Left ventricle myocardium inferior (tissue), 1 donor: ENCODE measurements at regions of chr12 and their contacts with region 1.

Region 1: DNA sequence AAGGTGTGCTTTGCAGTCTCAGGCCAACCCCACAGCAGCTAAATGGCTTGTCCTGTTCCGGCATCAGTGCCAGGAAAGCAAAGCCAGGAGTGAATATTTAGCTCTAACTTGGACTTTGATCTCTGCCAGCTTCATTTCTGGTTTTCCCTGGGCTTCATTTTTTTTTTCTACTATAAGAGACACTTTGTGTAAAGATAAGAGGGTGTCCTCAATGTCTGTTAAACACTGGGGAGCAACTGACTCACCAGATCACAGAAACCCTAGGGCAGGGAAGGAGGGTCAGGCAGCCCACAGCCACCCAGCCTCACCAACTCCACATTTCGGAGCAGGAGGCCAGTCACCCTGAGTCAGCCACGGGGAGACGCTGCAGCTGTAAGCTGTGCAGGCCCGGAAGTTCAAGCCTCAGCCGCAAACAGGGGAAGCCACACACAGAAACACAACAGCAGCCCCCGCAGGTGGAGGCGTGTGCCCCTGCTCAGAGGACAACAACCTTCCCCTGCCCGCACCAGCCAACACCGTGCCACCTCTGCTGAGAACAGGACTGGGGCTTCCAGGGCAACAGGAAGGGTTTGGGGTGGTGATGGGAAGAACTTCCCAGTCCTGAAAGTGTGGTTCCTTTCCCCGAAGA is 6.3 kb downstream of the TNFRSF1A start:
- DNase-seq: peak; percentile 72
- H3K4me3 ChIP-seq: peak overlapping the region; percentile 90
- H3K27ac ChIP-seq: peak overlapping the region; percentile 99
- H3K4me1 ChIP-seq: peaks cover 88% of the 10 kb centered on the region
- H3K27me3 ChIP-seq: no peaks in the 10 kb centered on the region
- CTCF ChIP-seq: peak; percentile 53

Region 2: DNA sequence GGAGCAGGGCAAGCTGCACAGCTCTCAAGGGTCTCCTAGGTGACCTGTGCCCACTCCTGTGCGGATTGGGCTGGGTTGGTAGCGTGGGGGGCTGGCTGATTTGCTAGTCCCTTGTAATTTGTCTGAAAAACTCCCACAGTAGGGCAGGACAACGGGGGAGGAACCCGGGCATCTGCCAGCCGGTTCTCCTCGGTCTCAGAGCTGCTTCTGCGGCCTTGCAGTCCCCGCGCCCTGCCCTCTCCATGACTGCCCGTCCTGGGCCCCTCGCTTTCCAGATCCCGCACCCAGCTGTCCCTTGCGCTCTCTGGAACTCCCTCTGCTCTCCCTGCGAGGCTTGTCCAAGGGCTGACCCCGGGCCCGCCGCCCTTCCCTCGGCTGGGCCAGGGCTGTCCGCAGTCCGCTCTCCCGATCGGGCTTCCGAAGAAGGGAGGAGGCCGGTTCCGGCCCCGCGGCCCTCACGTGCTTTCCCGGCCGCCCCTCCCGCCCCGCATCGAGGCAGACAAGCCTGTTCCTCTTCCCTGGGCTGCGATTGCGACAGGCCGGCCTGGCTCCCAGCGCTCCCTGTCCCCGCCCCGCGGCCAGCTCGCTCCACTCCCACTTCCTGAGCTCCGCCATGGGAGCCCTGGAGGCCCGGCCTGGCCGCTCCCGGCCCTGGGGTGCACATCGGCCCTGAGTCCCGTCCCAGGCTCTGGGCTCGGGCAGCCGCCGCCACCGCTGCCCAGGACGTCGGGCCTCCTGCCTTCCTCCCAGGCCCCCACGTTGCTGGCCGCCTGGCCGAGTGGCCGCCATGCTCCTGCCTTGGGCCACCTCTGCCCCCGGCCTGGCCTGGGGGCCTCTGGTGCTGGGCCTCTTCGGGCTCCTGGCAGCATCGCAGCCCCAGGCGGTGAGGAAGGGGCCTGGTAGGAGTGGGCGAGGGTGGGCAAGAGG is 48.3 kb after region 1 on chr12 and contains the start of gene LTBR:
- intact Hi-C with region 1: loop called (anchors 10 kb)
- DNase-seq: peak; percentile 98
- H3K4me3 ChIP-seq: peak within 1 kb of the TSS; percentile 76
- H3K27ac ChIP-seq: peak within 1 kb of the TSS; percentile 97
- H3K4me1 ChIP-seq: peaks cover 41% of the 10 kb centered on the region
- H3K27me3 ChIP-seq: no peaks in the 10 kb centered on the region
- CTCF ChIP-seq: peak; percentile 20
- total RNA-seq, gene LTBR: 23.5 TPM